ENCODE measurements at regions of chr19 and their contacts with region 1.

Region 1: GRCh38 chr19:5557691-5558090 is 10.1 kb downstream of the TINCR start:
- DNase-seq: peak; percentile 44
- H3K27ac ChIP-seq: peak overlapping the region; percentile 67
- CTCF ChIP-seq: no peak

Region 2: GRCh38 chr19:4014541-4015491 is 1542.9 kb before region 1 on chr19:
- CTCF ChIA-PET with region 1: no interaction called
- POLR2A ChIA-PET with region 1: no interaction called
- DNase-seq: no peak
- H3K27ac ChIP-seq: no peak overlapping the region
- CTCF ChIP-seq: no peak

Region 3: DNA sequence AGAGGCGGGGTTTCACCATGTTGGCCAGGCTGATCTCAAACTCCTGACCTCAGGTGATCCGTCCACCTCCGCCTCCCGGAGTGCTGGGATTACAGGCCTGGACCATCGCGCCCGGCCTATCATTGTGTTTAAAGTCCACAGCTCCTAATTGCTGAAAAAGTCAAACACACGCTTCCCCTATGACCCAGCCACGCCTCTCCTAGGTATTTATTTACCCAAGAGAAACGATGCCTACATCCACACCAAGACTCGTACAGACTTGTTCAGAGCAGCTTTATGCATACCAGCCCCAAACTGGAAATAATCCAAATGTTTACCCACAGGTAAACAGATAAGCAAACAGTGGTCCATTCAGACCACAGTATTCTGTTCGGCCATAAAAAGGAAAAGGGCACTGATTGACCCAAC is 87.4 kb before region 1 on chr19:
- CTCF ChIA-PET with region 1: no interaction called
- POLR2A ChIA-PET with region 1: no interaction called
- DNase-seq: peak; percentile 73
- H3K27ac ChIP-seq: peak overlapping the region; percentile 50
- CTCF ChIP-seq: no peak

Region 4: GRCh38 chr19:5542665-5543064 is 15.0 kb before region 1 on chr19:
- CTCF ChIA-PET with region 1: interaction called, 10 read pairs
- POLR2A ChIA-PET with region 1: no interaction called
- DNase-seq: no peak
- H3K27ac ChIP-seq: no peak overlapping the region
- CTCF ChIP-seq: no peak

Region 5: DNA sequence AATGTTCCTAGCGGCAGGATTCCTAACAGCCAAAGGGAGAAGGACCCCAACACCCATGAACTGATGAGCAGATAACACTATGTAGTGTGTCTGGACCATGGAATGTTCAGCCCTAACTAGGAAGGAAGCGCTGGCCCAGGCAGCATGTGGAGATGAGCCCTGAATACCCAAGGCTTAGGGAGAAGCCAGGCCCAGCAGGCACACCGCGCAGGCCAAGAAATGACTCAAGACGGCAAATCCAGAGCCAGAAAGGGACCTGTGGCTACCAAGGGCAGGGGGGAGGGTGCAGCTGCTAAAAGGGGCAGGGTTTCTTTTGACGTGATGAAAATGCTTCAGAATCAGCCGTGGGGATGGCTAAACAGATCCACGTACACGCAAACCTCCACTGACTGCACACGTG is 30.8 kb after region 1 on chr19:
- CTCF ChIA-PET with region 1: no interaction called
- POLR2A ChIA-PET with region 1: no interaction called
- DNase-seq: no peak
- H3K27ac ChIP-seq: no peak overlapping the region
- CTCF ChIP-seq: no peak

Region 6: GRCh38 chr19:5607318-5608270 is 49.9 kb after region 1 on chr19:
- CTCF ChIA-PET with region 1: no interaction called
- POLR2A ChIA-PET with region 1: no interaction called
- DNase-seq: no peak
- H3K27ac ChIP-seq: no peak overlapping the region
- CTCF ChIP-seq: no peak

Measured in RWPE1 (cell line).